Head of caudate nucleus (tissue), 42 donors: ENCODE measurements at regions of chr6 and their contacts with region 1.

Region 1: GRCh38 chr6:90393232-90393884 is 96.7 kb upstream of the BACH2 start:
- DNase-seq: peak in 41 of 42 donors; percentile 19 to 86 (median 62)

Region 2: DNA sequence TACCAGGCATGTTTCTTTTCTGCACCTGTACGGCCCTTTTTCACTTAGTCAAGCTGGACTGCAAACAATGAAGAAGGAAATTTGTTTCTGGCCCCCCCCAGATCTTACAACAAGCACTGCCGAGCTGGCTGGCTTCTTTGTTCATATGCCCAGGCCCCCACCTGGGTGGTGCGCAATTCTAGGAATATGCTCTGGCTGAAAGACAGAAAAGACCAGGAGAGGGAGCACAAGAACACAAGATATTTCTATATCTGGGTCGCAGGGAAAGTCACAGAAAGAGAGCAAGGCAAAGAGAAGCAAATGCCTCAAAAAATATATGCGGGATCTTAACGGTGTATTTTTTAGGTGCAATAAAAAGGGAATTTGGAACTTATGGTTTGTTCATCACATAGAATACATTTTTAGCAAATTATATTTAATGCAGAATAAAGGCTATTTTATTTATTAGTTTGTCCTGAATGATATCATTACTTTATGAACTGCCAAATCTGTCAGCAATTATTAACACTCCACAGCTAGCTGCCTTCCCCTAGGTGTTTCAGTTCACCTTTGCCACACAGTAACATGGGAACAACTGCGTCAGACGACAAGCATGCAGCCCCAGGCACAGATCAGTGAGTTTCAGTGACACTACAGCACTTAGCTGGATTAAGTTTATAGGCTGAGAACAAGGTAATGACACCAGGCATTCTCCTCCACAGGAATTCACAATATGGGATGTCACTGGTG is 422.6 kb before region 1 on chr6:
- intact Hi-C with region 1: loop called (anchors 10 kb)
- DNase-seq: peak in 41 of 42 donors; percentile 27 to 82 (median 61)

Region 3: GRCh38 chr6:90251295-90251992 is 141.9 kb before region 1 on chr6:
- intact Hi-C with region 1: no loop called
- DNase-seq: no peak